PC-3 (cell line): ENCODE measurements at regions of chrX and their contacts with region 1.

Region 1: GRCh38 chrX:105975382-105975781 is 63.1 kb downstream of the SERPINA7 start:
- DNase-seq: peak; percentile 50
- ATAC-seq: peak; percentile 46; the same call in 1 of the 2 replicates
- H3K4me3 ChIP-seq: no peak overlapping the region
- H3K27ac ChIP-seq: no peak overlapping the region
- H3K4me1 ChIP-seq: no peaks in the 10 kb centered on the region
- H3K27me3 ChIP-seq: peaks cover 4% of the 10 kb centered on the region; the same call in 1 of the 2 replicates
- CTCF ChIP-seq: peak; percentile 65

Region 2: DNA sequence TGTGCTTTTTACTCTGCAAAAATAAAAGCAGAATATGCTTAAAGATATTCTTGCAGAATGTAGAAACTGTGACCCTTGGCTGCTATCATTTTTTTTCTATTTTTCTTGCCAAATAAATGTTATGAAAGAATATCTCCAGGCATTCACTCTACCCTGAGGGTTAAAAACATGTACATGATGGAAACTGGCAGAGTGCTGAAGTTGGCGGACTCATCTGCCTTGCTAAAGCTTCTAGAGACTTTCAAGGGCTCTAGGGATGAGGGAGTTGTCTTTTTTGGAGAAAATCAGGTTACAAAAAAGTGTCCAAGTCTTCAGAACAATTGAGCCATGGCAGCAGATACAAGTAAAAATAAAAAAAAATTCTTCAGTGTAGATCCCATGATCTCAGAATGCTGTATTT is 193.6 kb before region 1 on chrX:
- CTCF ChIA-PET with region 1: no interaction called
- POLR2A ChIA-PET with region 1: no interaction called
- intact Hi-C with region 1: no loop called
- DNase-seq: no peak
- ATAC-seq: no peak
- H3K4me3 ChIP-seq: no peak overlapping the region
- H3K27ac ChIP-seq: no peak overlapping the region
- H3K4me1 ChIP-seq: no peaks in the 10 kb centered on the region
- H3K27me3 ChIP-seq: no peaks in the 10 kb centered on the region
- CTCF ChIP-seq: no peak

Region 3: GRCh38 chrX:106039920-106040319 is 64.5 kb after region 1 on chrX:
- CTCF ChIA-PET with region 1: no interaction called
- POLR2A ChIA-PET with region 1: no interaction called
- intact Hi-C with region 1: loop called (anchors 1 kb)
- DNase-seq: peak; percentile 55
- ATAC-seq: peak; percentile 71
- H3K4me3 ChIP-seq: no peak overlapping the region
- H3K27ac ChIP-seq: no peak overlapping the region
- H3K4me1 ChIP-seq: peaks cover 12% of the 10 kb centered on the region; the same call in 1 of the 2 replicates
- H3K27me3 ChIP-seq: 0 out of 2 replicates have a peak, but pooled peaks cover 7% of the 10 kb centered on the region
- CTCF ChIP-seq: peak; percentile 57

Region 4: GRCh38 chrX:106170318-106170717 is 194.9 kb after region 1 on chrX:
- CTCF ChIA-PET with region 1: interaction called, 3 read pairs
- POLR2A ChIA-PET with region 1: no interaction called
- intact Hi-C with region 1: loop called (anchors 10 kb)
- DNase-seq: peak; percentile 53
- ATAC-seq: peak; percentile 51; the same call in 1 of the 2 replicates
- H3K4me3 ChIP-seq: no peak overlapping the region
- H3K27ac ChIP-seq: no peak overlapping the region
- H3K4me1 ChIP-seq: no peaks in the 10 kb centered on the region
- H3K27me3 ChIP-seq: peaks cover 37% of the 10 kb centered on the region
- CTCF ChIP-seq: peak; percentile 69